GM12878 (cell line): ENCODE measurements at regions of chr2 and their contacts with region 1.

Region 1: DNA sequence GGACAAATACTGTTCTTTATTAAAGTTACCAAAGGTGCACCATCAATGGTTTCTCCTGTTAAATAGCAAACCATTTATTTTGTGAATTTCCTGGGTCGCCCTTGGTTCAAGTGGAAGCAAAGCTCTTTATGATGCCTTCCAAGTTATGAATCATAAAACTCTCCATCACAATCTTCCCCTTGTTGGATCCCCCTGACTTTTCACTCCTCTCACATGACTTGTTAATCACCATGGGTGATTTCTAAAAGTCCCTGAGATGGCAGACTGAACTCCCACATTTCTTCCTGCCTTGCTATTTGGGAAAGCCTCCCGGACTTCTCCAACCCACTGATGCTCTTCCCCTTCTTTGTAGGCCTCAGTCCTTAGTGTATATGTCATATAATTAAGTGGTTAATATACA is 176.0 kb downstream of the THADA start:
- DNase-seq: no peak
- ATAC-seq: no peak
- H3K4me3 ChIP-seq: no peak overlapping the region
- H3K27ac ChIP-seq: no peak overlapping the region
- H3K4me1 ChIP-seq: peaks cover 51% of the 10 kb centered on the region
- H3K27me3 ChIP-seq: no peaks in the 10 kb centered on the region
- CTCF ChIP-seq: no peak
- EP300 ChIP-seq: no peak
- POLR2A ChIP-seq: no peak
- RAD21 ChIP-seq: no peak

Region 2: GRCh38 chr2:43408407-43409160 is 11.3 kb before region 1 on chr2:
- CTCF ChIA-PET with region 1: interaction called, 112 read pairs
- POLR2A ChIA-PET with region 1: interaction called, 185 read pairs
- RAD21 ChIA-PET with region 1: interaction called, 360 read pairs
- SMC1A ChIA-PET with region 1: interaction called, 378 read pairs
- in situ Hi-C with region 1: no loop called
- intact Hi-C with region 1: no loop called
- DNase-seq: peak; percentile 76
- ATAC-seq: peak; percentile 86
- H3K4me3 ChIP-seq: no peak overlapping the region
- H3K27ac ChIP-seq: peak overlapping the region; percentile 94
- H3K4me1 ChIP-seq: peaks cover 50% of the 10 kb centered on the region
- H3K27me3 ChIP-seq: no peaks in the 10 kb centered on the region
- CTCF ChIP-seq: no peak
- EP300 ChIP-seq: peak; percentile 71 to 87; a peak in 2 of 4 replicates
- POLR2A ChIP-seq: no peak
- RAD21 ChIP-seq: no peak